Right ventricle myocardium superior (tissue), 1 donor: ENCODE measurements at regions of chr11 and their contacts with region 1.

Region 1: DNA sequence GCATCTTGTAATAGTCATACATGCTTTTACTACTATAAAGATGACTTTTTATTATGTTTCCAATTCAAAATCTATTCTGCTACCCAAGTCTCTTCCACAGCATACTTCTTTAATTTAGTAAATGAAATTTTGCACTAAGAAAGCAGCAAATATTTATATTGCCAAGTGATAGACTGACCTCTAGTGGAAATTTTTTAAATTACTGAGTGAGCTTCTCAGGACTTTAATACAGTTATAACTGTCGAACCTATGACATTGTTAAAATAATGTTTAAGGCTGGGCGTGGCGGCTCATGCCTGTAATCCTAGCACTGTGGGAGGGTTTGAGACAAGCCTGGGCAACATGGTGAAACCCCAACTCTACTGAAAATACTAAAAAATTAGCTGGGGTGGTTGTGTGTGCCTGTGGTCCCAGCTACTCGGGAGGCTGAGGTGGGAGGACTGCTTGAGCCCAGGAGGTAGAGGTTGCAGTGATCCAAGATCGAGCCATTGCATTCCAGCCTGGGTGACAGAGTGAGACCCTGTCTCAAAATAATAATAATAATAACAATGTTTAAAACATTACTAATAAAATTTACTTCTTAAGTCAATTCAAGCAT is 27.3 kb downstream of the STK33 start:
- DNase-seq: no peak
- ATAC-seq: peak; percentile 39

Region 2: DNA sequence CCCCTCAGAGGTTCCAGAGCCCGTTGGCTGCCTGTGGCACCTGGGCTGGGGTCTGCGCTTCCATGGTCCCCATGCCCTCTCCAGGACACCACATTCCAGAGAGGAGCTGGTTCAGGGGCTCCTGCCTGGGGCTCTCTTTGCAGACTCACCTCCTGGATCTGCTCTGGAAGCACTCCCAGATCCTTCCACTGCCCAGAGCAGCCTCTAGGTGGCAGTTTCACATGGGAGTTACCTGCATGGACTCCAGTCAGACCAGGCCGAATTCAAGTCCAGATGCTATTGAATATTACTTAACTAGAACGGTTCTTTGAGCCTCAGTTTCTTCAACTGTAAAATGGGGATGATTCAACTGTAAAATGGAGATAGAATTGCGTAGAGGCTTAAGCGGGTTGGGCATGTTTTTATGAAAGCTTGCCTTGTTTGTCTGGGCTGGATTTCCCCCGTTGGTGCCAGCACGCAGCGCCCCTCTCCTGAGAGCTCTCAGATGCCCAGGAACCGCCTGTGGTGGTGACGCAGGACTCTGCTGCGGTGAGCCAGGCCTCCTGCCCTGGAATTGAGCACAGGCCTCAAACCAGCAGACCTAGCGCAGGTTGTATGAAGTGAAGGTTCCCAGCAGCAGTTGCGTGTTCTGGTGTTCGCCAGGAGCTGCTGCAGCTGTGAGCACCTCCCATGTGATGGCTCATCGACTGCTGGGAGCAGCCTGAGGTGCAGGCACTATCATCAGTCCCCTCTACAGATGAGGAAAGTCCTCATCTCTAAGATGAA is 347.3 kb before region 1 on chr11:
- intact Hi-C with region 1: loop called (anchors 5 kb)
- DNase-seq: no peak
- ATAC-seq: peak; percentile 77

Region 3: GRCh38 chr11:8247312-8247711 is 319.4 kb before region 1 on chr11:
- intact Hi-C with region 1: no loop called
- DNase-seq: no peak
- ATAC-seq: no peak

Region 4: GRCh38 chr11:8338138-8338537 is 228.6 kb before region 1 on chr11:
- intact Hi-C with region 1: loop called (anchors 5 kb)
- DNase-seq: peak; percentile 61
- ATAC-seq: peak; percentile 79